Activated CD4-positive, alpha-beta T cell treated with anti-CD3 and anti-CD28 coated beads, Interleukin-2, amount 10 ng/mL, durations not matched to agents 24 days and 14 days (primary cell): ENCODE measurements at regions of chr4 and their contacts with region 1.

Region 1: DNA sequence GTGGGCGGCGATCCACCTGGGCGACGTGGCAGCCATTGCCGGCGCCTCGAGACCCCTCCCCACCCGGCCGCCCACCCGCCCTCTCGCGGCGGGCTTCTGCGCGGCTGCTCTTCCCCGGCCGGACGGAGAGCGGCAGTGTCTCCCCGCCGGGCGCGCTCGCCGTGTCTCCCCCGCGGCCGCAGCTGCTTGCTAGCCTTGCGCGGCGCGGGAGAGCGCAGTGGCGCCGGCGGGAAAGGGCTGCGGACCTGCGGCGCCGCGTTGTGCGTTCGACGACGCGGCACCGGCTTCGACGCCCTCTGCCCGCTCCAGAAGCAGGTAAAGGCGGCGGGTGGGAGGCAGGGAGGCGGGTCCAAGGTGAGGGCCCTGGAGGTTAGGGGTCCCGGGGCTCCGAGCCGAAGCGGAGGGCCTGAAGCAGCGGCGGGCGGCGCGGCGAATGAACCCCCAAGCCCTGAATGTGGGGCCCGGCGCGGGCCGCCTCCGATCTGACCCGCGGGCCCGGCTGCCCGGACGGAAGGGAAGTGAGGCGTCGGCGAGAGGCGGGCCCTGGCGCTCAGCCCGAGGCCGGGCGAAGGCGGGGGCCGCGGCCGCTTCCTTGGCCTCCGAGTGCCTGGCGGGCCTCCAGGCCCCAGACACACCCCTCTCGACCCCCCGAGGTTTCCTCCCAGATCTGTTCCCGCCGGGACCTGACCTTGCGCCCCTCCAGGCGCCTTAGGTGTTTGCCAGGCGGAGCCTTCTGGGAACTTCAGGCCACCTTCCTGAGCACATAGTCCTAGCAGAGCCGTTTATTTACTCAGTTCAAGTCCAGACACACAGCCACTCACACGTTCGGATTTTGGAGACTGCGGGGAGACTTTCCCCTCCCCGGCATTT is at the start of gene N4BP2:
- DNase-seq: peak; percentile 92
- H3K4me3 Mint-ChIP-seq: peak within 1 kb of the TSS; percentile 91
- H3K27ac Mint-ChIP-seq: peak within 1 kb of the TSS; percentile 99
- H3K4me1 Mint-ChIP-seq: peaks cover 30% of the 10 kb centered on the region
- H3K27me3 Mint-ChIP-seq: peaks cover 3% of the 10 kb centered on the region
- total RNA-seq, gene N4BP2: 24.5 and 24.7 TPM in 2 replicates

Region 2: DNA sequence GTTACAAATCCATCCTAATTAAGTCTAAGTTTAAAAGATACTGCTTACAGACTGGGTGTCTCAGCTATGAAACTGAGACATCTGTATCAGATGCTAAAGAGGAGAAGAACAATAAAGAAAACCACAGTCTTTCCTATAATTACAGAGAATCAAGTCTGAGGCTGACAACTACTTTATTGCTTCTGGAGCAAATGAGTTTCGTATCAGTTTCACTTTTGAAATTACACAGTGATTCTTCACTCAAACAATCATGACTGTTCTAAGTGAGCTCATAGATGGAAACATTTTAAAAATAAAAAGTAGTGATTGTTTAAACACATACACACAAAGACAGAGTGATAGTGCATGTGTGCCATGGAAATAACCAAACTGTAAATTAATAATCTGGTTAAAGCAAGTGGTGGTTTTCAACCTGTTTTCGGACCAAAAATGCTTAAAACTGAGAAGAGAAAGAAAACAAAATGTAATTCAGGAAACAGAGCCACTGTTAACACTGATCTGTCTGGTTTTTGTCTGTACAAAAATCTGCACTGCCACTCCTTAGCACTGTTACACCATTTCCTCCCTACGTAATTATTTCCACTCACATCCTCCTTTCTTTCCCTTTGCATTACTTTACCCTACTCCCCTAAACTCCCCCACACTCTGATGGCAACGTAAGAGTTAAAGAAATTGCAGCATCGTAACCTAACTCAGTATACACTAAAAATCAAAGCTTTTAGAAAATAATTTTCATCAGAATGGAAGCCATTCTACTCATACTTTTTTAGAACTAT is 703.3 kb before region 1 on chr4:
- intact Hi-C with region 1: loop called (anchors 5 kb)
- DNase-seq: peak; percentile 82
- H3K4me3 Mint-ChIP-seq: peak overlapping the region; percentile 78
- H3K27ac Mint-ChIP-seq: peak overlapping the region; percentile 92
- H3K4me1 Mint-ChIP-seq: peaks cover 53% of the 10 kb centered on the region
- H3K27me3 Mint-ChIP-seq: no peaks in the 10 kb centered on the region

Region 3: GRCh38 chr4:39638354-39639240 is 418.4 kb before region 1 on chr4 and contains the start of gene SMIM14:
- intact Hi-C with region 1: loop called (anchors 5 kb)
- DNase-seq: peak; percentile 97
- H3K4me3 Mint-ChIP-seq: peak within 1 kb of the TSS; percentile 90
- H3K27ac Mint-ChIP-seq: peak within 1 kb of the TSS; percentile 69
- H3K4me1 Mint-ChIP-seq: peaks cover 31% of the 10 kb centered on the region
- H3K27me3 Mint-ChIP-seq: peaks cover 31% of the 10 kb centered on the region
- total RNA-seq, gene SMIM14: 1.0 and 2.0 TPM in 2 replicates

Region 4: DNA sequence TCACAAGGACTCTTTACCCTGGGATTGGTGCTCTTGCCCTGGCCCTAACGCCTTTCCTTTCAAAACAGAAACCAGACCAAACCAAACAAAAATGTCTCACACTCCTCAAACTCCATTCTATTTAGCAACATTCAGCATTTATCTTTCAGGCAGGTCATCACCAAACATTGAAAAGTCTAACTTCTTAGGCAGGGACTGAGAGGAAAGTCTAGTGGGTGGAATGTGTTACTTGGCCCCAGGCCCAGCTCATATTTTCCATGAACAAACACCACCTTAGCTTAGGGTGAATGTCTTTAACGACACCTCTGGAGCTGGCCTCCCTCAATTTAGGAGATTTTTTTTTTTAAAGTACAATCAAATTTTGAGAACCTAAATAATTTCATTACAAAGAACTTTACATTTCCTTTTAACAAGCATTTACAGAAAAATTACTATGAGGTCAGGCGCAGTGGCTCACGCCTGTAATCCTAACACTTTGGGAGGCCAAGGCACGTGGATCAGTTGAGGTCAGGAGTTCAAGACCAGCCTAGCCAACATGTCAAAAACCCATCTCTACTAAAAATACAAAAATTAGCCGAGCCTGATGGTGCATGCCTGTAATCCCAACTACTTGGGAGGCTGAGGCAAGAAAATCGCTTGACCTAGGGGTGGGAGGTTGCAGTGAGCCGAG is 10.5 kb before region 1 on chr4:
- intact Hi-C with region 1: loop called (anchors 1 kb)
- DNase-seq: peak; percentile 64
- H3K4me3 Mint-ChIP-seq: peak overlapping the region; percentile 16
- H3K27ac Mint-ChIP-seq: peak overlapping the region; percentile 89
- H3K4me1 Mint-ChIP-seq: peaks cover 10% of the 10 kb centered on the region
- H3K27me3 Mint-ChIP-seq: no peaks in the 10 kb centered on the region

Region 5: DNA sequence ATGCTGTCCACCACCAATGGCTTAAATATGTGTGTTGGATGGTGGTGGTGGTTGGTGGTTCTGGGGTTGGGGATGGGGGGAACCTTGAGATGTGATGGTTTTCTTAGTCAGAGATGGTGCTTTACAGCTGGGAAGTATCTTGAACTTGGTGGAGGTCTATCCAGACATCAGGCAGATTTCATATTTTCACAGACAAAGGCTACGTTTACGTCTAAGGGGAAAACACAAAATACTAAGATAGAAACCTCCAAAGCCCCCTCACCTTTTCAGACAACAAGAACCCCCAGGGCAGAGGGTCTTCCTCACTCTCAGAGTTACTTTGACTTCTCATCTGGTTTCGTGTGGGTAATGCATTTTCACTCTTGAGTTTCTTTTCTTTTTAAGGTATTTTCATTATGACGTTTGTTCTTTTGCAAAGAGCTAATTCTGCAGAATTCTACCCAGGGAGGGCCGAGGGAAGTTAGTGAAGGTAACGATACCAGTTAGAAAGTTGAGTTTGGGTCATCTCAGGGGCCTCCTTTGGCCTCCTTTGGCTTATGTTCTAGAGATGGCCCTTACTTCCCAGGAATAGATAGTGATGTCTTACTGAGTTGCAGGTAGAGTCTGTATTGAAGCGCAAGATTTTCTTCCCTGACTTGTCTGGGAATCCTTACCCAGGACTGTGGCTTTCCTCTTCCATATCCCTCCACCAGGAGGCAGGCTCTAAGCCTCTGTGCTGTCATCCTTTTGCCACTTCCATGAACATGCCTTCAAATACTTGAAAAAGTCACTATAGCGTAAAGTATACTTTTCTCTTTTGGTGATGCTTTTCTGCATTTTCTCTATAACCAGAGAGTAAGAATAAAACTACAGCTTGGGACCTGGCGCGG is 171.8 kb after region 1 on chr4:
- intact Hi-C with region 1: loop called (anchors 2 kb)
- DNase-seq: peak; percentile 80
- H3K4me3 Mint-ChIP-seq: peak overlapping the region; percentile 82
- H3K27ac Mint-ChIP-seq: peak overlapping the region; percentile 98
- H3K4me1 Mint-ChIP-seq: peaks cover 76% of the 10 kb centered on the region
- H3K27me3 Mint-ChIP-seq: no peaks in the 10 kb centered on the region

Region 6: DNA sequence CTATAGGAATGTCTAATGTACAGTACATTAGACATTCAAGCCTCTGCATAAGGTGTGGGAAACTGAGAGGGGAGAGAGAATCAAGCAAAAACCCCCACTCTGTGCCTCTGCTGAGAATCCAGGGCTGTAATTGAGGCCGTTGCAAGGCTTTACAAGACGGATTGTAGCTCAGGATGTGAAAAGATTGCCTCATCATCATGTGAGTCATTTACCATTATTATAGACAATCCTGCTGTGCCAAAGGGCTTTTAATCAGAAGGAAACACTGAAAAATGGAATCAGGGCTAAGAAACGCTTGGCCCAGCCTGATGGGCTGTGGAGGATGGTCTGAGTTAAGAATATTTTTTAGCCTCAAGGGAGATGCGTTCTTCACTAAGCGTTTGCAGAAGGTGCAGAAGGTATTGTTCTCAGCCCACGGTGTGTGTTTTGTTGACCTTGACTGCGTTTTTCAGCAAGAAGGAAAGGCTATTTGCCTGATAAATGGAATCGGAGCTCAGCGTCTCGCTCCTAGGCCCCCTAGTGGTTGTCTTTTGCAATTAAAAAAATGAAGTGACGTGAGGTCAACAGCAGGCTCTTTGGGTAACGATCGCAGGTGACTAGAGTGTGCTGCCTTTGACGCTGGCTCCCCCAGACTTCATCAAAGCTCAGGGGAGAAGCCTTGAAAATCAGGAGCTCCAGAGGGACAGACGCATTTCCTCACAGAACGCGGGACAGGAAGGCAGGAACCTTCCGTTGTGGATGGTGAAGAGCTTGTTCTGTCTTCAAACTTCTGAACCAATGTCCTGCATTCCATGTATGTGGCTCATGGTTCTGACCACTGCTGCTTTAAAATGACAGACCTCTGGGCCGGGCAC is 260.1 kb after region 1 on chr4:
- intact Hi-C with region 1: loop called (anchors 1 kb)
- DNase-seq: peak; percentile 91
- H3K4me3 Mint-ChIP-seq: peak overlapping the region; percentile 91
- H3K27ac Mint-ChIP-seq: peak overlapping the region; percentile 100
- H3K4me1 Mint-ChIP-seq: peaks cover 48% of the 10 kb centered on the region
- H3K27me3 Mint-ChIP-seq: no peaks in the 10 kb centered on the region

Region 7: DNA sequence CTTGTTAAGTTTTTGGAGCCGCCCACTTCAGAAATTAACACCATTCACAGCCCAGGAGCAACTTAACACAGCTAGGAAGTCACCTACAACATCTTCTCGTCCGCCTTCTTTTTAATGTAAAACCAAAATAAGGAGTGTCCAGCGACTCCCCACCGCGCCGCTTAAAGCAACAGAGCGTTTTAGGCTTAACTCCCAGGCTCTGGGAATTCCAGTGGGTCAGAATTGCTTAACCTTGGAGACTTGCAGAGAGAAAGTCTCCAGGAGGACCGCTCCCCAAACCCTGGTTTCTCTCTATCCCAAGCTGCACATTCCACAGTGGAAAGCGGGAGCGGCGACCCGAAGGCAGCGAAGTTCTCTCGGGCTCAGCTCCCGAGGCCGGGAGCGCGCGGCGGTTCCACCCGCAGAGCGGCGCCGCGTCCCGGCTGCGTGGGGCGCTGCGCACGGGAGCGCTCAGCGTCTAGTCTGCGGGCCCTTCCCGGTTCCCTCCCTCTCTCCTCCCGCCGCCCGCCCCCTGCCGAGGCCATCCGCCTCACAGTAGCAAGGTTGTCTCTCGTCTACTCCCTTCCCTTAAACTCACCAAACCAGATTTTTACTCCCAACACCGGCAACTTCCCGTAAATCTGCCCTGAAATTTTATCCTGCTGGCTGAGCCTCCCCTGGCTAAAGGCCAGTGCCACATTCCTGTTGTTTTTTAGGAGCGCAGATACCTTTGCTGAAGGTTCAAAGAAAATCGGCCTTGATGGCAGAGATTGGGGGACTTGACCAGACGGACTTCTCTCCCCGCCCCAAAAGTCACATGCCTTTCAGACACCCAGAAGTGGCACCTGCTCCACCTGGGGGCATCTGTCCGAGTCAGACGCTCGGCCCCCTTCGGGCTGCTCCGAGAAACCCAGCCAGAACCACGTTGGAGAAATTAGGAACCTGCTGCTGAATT is 572.7 kb after region 1 on chr4 and contains the start of gene RBM47:
- intact Hi-C with region 1: no loop called
- DNase-seq: peak; percentile 73
- H3K4me3 Mint-ChIP-seq: peak within 1 kb of the TSS; percentile 89
- H3K27ac Mint-ChIP-seq: peak within 1 kb of the TSS; percentile 64
- H3K4me1 Mint-ChIP-seq: peaks cover 34% of the 10 kb centered on the region
- H3K27me3 Mint-ChIP-seq: peaks cover 20% of the 10 kb centered on the region
- total RNA-seq, gene RBM47: 10.7 and 13.0 TPM in 2 replicates